Left cardiac atrium (tissue), 4 donors: ENCODE measurements at regions of chr4 and their contacts with region 1.

Region 1: GRCh38 chr4:123832173-123833026 is 435.8 kb downstream of the SPRY1 start:
- DNase-seq: peak; percentile 70
- ATAC-seq: peak; percentile 91 to 95

Region 2: DNA sequence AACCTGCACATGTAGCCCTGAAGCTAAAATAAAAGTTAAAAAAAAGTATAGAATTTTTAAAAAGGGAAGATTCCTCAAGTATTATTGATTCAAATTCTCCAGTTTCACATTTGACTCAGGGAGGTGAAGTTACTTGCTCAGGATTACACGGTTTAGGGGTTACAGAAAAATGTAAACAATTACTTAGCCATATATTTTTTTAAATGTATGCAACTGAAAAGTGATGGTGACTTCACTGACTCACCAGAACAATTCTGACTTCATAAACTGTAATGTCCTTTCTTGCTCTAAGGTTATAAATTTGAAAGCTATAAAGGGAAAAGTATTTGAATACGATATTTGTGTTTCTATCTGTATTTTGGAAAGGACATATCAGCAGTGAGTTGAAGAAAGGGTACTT is 64.6 kb before region 1 on chr4:
- intact Hi-C with region 1: no loop called
- DNase-seq: no peak
- ATAC-seq: no peak

Region 3: DNA sequence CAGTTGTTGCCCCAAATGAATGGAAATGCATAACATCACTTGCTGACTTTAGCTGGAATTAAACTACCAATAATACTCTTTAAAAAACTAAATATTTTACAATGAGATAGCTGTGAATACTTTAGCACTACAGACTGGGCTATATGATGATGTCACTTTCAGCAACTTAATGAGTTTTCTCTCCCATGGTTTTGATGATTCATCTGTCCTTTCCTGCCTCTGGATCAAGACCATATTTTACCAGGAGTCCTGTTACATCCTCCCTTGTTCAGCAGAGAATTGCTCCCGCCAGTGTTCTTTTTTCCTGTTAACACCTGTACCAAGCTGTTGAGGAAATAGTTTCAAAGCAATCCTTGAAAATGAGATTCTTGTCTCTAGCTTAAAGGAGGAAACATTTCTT is 107.2 kb after region 1 on chr4:
- intact Hi-C with region 1: loop called in 1 of 2 experiments (anchors 10 kb)
- DNase-seq: no peak
- ATAC-seq: peak in 1 of 2 donors; percentile 84

Region 4: DNA sequence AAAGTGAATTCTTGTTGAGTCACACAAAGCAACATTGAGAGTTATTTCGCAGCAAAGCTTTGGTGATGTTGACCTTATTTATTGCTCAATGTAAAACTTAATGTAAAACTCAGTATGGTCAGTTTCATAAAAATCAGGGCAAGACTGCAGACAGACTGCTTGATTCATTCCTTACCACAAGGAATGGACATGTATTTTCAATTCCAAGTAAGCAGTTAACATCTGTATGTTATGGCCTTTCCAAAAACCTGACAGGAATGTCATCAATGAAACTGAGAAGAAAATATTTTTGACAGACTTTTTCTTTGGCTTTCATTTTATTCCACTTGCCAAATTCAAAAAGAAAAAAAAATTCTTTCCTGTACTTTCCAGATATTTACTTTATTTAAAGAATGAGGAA is 391.9 kb after region 1 on chr4:
- intact Hi-C with region 1: no loop called
- DNase-seq: no peak
- ATAC-seq: no peak